ENCODE measurements at regions of chr3 and their contacts with region 1.

Region 1: GRCh38 chr3:51995346-51996163 is at the start of gene RPL29:
- DNase-seq: peak; percentile 84
- ATAC-seq: peak; percentile 98
- H3K4me3 Mint-ChIP-seq: peak within 1 kb of the TSS; percentile 100
- H3K27ac Mint-ChIP-seq: peak within 1 kb of the TSS; percentile 100
- H3K4me1 Mint-ChIP-seq: peaks cover 37% of the 10 kb centered on the region
- H3K27me3 Mint-ChIP-seq: no peaks in the 10 kb centered on the region
- CTCF ChIP-seq: no peak
- total RNA-seq, gene RPL29: 1,884 and 2,140 TPM in 2 replicates

Region 2: DNA sequence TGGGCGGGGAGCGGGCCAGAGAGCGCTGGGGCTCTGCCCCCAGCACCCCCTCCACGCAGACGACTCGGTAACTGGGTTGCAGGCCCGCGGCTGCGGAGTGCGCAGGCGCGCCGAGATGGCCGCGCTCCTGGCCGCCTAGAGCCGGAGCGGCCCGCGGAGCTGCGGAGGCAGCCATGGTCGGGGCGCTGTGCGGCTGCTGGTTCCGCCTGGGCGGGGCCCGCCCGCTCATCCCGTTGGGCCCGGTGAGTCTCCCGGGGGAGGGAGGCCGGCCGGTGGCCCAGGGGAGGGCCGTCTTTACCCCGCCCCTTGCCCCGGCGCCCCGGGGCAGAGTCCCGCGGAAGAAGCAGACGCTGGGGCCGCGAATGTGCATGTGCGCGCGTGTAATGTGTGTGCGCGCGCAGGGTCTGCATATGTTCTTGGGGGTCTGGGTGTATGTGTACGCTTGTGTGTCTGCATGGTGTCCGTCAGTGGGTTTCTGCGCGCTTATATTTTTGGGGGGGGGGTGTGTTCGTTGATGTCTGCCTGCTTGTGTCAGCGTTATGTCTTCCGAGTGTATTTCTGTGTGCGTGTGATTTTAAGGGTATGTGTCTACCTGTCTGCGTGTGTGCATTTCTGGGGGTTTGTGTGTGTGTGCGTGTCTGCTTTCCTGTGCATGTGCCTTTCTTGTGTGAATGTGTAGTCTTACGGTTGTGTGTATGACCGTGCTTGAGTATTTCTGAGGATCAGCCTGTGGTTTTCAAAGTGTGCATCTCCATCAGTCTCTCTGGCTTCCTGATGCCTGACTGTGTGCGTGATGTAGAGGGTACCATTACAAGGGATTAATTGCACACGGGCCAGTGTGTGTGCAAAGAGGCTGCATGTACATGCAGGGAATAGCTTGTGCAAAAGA is 20.3 kb before region 1 on chr3 and contains the start of gene ABHD14A:
- CTCF ChIA-PET with region 1: interaction called, 7 read pairs
- POLR2A ChIA-PET with region 1: interaction called, 36 read pairs
- intact Hi-C with region 1: loop called (anchors 1 kb)
- DNase-seq: peak; percentile 74
- ATAC-seq: peak; percentile 76
- H3K4me3 Mint-ChIP-seq: peak within 1 kb of the TSS; percentile 98
- H3K27ac Mint-ChIP-seq: peak within 1 kb of the TSS; percentile 91
- H3K4me1 Mint-ChIP-seq: peaks cover 28% of the 10 kb centered on the region
- H3K27me3 Mint-ChIP-seq: no peaks in the 10 kb centered on the region
- CTCF ChIP-seq: no peak
- total RNA-seq, gene ABHD14A: 5.1 and 5.2 TPM in 2 replicates

Region 3: DNA sequence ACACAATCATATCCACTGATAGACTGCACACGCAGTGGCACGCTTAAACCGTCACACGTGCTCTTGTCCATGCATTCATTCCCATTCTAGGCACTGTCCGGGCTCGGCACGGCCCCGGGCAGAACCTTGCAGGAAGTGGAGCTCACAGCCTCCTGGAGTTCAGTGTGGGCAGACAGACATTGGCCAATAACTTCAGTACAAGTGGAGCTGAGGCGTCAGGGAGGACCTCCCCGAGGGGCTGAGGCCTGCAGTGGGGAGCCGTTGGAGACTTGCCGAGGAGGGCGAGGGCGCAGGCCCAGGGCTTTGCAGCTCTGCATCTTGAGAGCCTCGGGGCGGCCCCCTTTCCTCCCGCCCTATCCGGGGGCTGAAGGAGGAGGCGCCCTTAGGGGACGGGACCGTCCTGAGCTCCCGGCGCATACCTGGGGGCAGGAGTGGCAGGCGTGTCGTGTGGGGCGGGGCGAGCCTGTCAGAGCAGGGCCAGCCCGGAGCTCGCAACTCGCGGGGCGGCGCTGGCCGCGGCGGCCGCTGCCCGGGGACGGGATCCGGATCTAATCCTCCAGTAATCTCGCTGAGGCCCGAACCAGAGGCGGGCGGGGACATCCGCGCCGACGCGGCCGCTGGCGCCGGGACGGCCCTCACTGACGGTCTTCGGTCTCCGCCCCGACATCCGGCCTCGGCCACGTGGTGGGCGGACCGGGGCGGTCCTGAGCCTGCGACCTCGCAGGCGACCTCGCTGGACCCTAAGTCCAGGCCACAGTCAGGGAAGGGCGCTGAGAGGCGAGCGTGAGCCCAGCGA is 12.6 kb before region 1 on chr3 and contains the start of gene ACY1:
- CTCF ChIA-PET with region 1: interaction called, 4 read pairs
- POLR2A ChIA-PET with region 1: interaction called, 58 read pairs
- intact Hi-C with region 1: loop called (anchors 1 kb)
- DNase-seq: peak; percentile 70
- ATAC-seq: peak; percentile 79
- H3K4me3 Mint-ChIP-seq: peak within 1 kb of the TSS; percentile 86
- H3K27ac Mint-ChIP-seq: peak within 1 kb of the TSS; percentile 91
- H3K4me1 Mint-ChIP-seq: peaks cover 23% of the 10 kb centered on the region
- H3K27me3 Mint-ChIP-seq: no peaks in the 10 kb centered on the region
- CTCF ChIP-seq: no peak
- total RNA-seq, gene ACY1: 24.9 and 26.7 TPM in 2 replicates

Region 4: GRCh38 chr3:52014613-52015012 is 19.1 kb after region 1 on chr3:
- CTCF ChIA-PET with region 1: no interaction called
- POLR2A ChIA-PET with region 1: no interaction called
- intact Hi-C with region 1: no loop called
- DNase-seq: no peak
- ATAC-seq: no peak
- H3K4me3 Mint-ChIP-seq: no peak overlapping the region
- H3K27ac Mint-ChIP-seq: no peak overlapping the region
- H3K4me1 Mint-ChIP-seq: no peaks in the 10 kb centered on the region
- H3K27me3 Mint-ChIP-seq: peaks cover 2% of the 10 kb centered on the region
- CTCF ChIP-seq: no peak

Region 5: DNA sequence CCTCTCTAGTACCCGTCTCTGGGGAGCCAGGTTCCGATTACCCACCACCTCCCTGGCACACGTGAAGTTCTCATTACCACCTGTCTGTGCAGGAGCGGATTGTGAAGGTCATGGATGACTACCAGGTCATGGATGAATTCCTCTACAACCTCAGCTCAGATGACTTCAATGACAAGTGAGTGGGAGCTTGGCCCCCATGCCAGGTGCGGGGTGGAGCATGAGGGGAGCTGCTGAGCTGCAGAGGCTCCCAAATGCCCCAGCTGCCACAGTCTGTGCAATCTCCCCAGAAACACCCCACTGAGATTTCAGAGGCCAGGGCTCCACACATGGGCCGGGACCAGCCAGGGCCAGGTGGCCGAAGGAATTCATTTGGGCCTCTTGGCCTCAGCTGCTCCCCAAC is 354.9 kb after region 1 on chr3:
- CTCF ChIA-PET with region 1: no interaction called
- POLR2A ChIA-PET with region 1: no interaction called
- intact Hi-C with region 1: no loop called
- DNase-seq: no peak
- ATAC-seq: no peak
- H3K4me3 Mint-ChIP-seq: no peak overlapping the region
- H3K27ac Mint-ChIP-seq: no peak overlapping the region
- H3K4me1 Mint-ChIP-seq: no peaks in the 10 kb centered on the region
- H3K27me3 Mint-ChIP-seq: no peaks in the 10 kb centered on the region
- CTCF ChIP-seq: no peak

Region 6: DNA sequence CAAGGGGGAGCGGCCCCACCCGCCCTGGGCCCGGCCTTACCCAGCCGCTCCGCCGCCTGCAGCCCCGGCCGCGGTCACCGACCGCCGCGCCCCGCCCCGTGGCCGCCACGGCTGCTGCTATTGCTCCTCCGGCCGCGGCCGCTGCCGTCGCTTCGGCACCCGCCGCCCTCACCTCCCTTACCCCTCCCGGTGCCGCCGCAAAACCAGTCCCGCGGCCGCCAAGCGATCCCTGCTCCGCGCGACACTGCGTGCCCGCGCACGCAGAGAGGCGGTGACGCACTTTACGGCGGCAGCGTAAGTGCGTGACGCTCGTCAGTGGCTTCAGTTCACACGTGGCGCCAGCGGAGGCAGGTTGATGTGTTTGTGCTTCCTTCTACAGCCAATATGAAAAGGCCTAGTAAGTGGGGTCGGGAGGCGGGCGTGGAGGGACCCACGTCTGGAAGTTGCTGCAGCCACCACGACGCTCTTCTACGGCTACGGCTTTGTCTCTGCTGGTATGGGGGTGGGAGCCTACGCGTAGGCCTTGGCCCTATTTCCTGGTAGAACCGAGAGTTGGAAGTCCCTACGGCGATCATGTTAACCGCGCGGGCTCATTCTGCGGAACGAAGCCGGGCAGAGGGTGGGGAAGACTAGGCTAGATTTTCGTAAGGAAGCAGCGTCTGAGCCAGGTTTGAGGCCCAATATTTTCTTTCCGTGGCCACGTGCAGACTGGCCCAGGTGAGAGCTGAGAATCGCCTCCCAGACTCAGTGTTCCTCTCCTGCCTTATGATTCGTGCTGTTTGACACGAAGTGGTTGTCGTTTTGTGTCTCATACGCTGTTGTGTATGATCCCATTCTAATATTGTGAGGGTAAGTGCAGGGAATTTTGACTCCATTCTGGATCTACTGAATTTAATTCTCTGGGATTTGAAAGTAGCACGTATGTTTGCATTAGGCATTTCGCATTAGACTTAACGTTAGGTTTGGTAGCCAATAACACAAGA is 690.4 kb after region 1 on chr3 and contains the starts of genes GNL3 and PBRM1:
- CTCF ChIA-PET with region 1: no interaction called
- POLR2A ChIA-PET with region 1: no interaction called
- intact Hi-C with region 1: loop called (anchors 5 kb)
- DNase-seq: peak; percentile 92
- ATAC-seq: peak; percentile 89
- H3K4me3 Mint-ChIP-seq: peak within 1 kb of the TSS; percentile 96
- H3K27ac Mint-ChIP-seq: peak within 1 kb of the TSS; percentile 95
- H3K4me1 Mint-ChIP-seq: peaks cover 53% of the 10 kb centered on the region
- H3K27me3 Mint-ChIP-seq: no peaks in the 10 kb centered on the region
- CTCF ChIP-seq: no peak
- total RNA-seq, gene GNL3: 137 and 145 TPM in 2 replicates
- total RNA-seq, gene PBRM1: 60.0 and 62.1 TPM in 2 replicates

Measured in activated B cell treated with CpG ODN at 0.5 μM for 24 hours (primary cell).